Transverse colon (tissue), 4 donors: ENCODE measurements at regions of chr16 and their contacts with region 1.

Region 1: GRCh38 chr16:74216319-74216718 is 80.3 kb upstream of the PSMD7 start:
- DNase-seq: no peak
- H3K4me3 ChIP-seq: no peak overlapping the region
- H3K27ac ChIP-seq: no peak overlapping the region
- H3K4me1 ChIP-seq: no peaks in the 10 kb centered on the region
- H3K27me3 ChIP-seq: no peaks in the 10 kb centered on the region
- CTCF ChIP-seq: no peak
- EP300 ChIP-seq: no peak
- POLR2A ChIP-seq: no peak

Region 2: GRCh38 chr16:74053826-74054225 is 162.5 kb before region 1 on chr16:
- in situ Hi-C with region 1: no loop called
- intact Hi-C with region 1: no loop called
- DNase-seq: no peak
- H3K4me3 ChIP-seq: no peak overlapping the region
- H3K27ac ChIP-seq: no peak overlapping the region
- H3K4me1 ChIP-seq: no peaks in the 10 kb centered on the region
- H3K27me3 ChIP-seq: no peaks in the 10 kb centered on the region
- CTCF ChIP-seq: no peak
- EP300 ChIP-seq: no peak
- POLR2A ChIP-seq: no peak

Region 3: GRCh38 chr16:74153773-74154172 is 62.5 kb before region 1 on chr16:
- in situ Hi-C with region 1: loop called in 1 of 4 experiments (anchors 10 kb)
- intact Hi-C with region 1: no loop called
- DNase-seq: no peak
- H3K4me3 ChIP-seq: no peak overlapping the region
- H3K27ac ChIP-seq: no peak overlapping the region
- H3K4me1 ChIP-seq: no peaks in the 10 kb centered on the region
- H3K27me3 ChIP-seq: no peaks in the 10 kb centered on the region
- CTCF ChIP-seq: no peak
- EP300 ChIP-seq: no peak
- POLR2A ChIP-seq: no peak

Region 4: GRCh38 chr16:75919664-75920063 is 1703.3 kb after region 1 on chr16:
- in situ Hi-C with region 1: no loop called
- intact Hi-C with region 1: loop called (anchors 5 kb)
- DNase-seq: no peak
- H3K4me3 ChIP-seq: no peak overlapping the region
- H3K27ac ChIP-seq: no peak overlapping the region
- H3K4me1 ChIP-seq: no peaks in the 10 kb centered on the region
- H3K27me3 ChIP-seq: no peaks in the 10 kb centered on the region
- CTCF ChIP-seq: no peak
- EP300 ChIP-seq: no peak
- POLR2A ChIP-seq: no peak